Astrocyte of the cerebellum (primary cell): ENCODE measurements at regions of chr17 and their contacts with region 1.

Region 1: GRCh38 chr17:49851387-49852291 is 3.8 kb upstream of the TAC4 start:
- DNase-seq: peak; percentile 37
- H3K4me3 ChIP-seq: peak overlapping the region; percentile 42
- CTCF ChIP-seq: peak; percentile 72

Region 2: DNA sequence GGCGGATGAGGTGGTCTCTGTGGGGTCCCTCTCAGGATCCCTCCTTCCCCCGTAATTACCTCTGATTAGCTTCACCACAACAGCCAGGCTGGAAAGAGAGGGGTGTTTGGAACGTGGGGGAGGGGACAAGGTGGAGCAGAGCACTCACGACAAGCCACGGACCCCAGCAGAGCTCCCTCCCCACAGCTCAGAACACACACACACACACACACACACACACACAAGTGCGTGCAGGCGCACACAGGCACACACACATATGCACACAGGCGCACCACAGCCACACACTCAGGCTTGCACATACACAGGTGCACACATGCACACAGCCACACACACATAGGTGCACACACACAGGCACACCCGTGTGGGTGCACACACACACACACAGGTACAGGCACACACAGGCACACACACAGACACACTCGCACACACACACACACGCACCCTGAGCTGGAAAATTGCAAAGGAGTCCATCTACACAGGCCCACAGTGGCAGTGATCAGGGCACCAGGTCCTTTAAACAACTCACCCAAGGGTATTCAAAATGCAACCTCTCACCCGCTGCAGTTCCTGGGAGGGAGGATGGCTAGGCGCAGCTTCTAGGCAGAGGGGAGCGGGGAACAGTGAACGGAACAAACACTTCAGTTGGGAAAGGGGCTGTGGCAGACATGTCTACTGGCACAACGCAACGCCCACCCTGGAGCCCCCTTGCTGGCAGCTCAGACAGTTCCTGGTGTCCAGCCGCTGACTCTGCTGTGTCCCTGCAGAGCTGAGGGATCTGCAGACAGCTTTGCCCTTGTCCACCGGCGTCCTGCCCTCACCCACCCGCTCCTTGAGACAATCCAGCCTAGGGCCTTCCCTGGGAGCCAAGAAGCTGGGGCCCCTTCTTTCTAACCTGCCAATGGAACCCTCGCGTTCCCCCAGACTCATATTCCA is 57.4 kb after region 1 on chr17:
- in situ Hi-C with region 1: loop called (anchors 5 kb)
- DNase-seq: no peak
- H3K4me3 ChIP-seq: no peak overlapping the region
- CTCF ChIP-seq: no peak